Dendritic cell treated with granulocyte-macrophage colony-stimulating factor and Interleukin-4, amounts not matched to agents 40 ng/mL and 50 ng/mL, for 4 days (primary cell): ENCODE measurements at regions of chr5 and their contacts with region 1.

Region 1: GRCh38 chr5:138542956-138543729 is at the start of gene ETF1:
- H3K4me3 Mint-ChIP-seq: peak within 1 kb of the TSS; percentile 97
- H3K27ac Mint-ChIP-seq: peak within 1 kb of the TSS; percentile 91
- H3K4me1 Mint-ChIP-seq: peaks cover 59% of the 10 kb centered on the region
- H3K27me3 Mint-ChIP-seq: no peaks in the 10 kb centered on the region

Region 2: DNA sequence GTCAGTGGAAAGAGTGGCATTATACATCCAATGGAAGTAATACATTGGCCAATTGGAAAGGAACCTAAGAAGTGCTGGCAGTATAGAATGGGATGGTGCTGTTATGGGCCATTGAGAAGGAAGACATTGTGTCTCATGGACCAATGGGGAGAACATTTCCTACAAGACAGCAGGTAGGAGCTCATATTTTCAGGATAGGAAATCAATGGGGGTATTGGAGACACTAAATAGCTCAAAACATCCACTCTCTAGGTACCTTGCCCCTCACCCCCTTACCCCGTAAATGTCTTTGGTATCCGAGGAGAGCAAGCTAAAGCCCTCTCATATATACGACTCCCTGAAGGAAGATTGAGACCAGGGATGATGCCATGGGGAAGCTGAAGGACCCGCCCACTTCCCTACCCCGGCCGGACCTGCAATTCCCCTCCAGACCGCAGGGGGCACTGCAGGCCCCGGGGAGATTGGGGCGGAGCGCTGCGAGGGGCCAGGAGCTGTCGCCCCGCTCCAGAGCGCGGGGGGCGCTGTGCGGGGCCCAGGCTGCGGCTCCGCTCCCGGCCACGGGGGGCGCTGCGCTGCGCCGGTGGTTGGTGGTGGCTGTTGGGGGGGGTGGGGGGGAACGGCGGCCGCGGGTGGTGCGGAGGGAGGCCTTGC is 190.9 kb before region 1 on chr5 and contains the start of gene KDM3B:
- intact Hi-C with region 1: loop called (anchors 10 kb)
- H3K4me3 Mint-ChIP-seq: peak within 1 kb of the TSS; percentile 96
- H3K27ac Mint-ChIP-seq: peak within 1 kb of the TSS; percentile 99
- H3K4me1 Mint-ChIP-seq: peaks cover 44% of the 10 kb centered on the region
- H3K27me3 Mint-ChIP-seq: no peaks in the 10 kb centered on the region

Region 3: DNA sequence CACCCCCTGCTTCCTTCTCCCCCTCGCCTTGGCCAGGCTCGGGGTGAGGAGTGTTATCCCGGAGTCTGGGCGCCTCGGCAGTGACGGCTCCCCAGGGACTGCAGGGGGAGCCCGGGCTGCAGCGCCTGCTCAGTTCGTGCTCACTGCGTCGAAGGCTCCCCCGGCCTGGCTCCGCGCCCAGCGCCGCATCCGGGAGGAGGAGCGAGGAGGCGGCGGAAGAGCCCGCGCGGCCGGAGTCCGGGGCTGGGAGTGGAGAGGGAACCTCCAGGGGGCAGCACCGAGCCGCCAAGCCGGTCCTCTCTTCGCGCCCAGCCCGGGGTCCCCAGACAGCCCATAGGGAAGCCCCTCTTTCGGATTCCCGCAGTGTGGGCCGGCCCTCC is 79.1 kb before region 1 on chr5:
- intact Hi-C with region 1: loop called (anchors 1 kb)
- H3K4me3 Mint-ChIP-seq: peak overlapping the region; percentile 81
- H3K27ac Mint-ChIP-seq: peak overlapping the region; percentile 97
- H3K4me1 Mint-ChIP-seq: peaks cover 60% of the 10 kb centered on the region
- H3K27me3 Mint-ChIP-seq: peaks cover 27% of the 10 kb centered on the region

Region 4: GRCh38 chr5:138575194-138576015 is 32.3 kb after region 1 on chr5 and contains the start of gene HSPA9:
- intact Hi-C with region 1: loop called (anchors 1 kb)
- H3K4me3 Mint-ChIP-seq: peak within 1 kb of the TSS; percentile 89
- H3K27ac Mint-ChIP-seq: peak within 1 kb of the TSS; percentile 100
- H3K4me1 Mint-ChIP-seq: peaks cover 17% of the 10 kb centered on the region
- H3K27me3 Mint-ChIP-seq: no peaks in the 10 kb centered on the region